WTC11 (cell line): ENCODE measurements at regions of chr2 and their contacts with region 1.

Region 1: DNA sequence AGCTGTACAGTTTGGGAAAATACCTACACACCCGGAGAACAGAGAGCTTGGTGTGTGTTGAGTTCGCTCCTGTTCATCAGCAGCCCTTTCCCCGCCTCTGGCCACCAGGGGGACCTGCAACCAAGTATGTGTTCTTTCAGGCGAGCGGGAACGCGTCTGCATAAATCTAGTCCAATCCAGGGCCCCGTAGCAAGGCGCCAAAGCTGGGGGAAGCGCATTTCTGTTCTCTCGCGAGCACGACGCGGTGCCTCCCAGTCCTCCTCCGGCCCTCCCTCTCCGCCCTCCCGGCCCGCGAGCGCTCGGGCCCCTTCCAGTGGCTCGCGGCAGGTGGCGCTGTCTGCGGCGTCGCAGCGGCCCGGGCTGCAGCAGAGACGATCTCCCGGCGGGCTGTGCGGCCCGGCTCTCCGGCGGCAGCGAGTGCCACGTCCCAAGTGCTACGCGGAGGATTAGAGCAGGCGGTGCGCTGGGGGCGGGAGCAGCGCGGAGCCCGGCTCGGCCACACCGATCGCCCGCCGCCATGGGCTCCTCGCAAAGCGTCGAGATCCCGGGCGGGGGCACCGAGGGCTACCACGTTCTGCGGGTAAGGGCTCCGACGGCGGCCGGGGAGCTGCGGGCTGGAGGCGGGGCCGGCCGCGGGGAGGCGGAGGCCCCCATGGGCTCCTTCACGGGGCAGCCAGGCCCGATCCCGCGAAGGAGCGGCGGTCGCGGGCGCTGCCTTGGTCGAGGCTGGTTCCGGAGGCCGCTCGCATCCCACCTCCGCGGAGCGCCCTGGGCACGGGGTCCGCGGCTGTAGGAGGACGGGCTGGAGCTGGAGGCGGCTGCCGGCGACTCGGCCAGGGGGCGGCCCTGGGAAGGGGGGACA is at the start of gene GORASP2:
- DNase-seq: peak; percentile 99
- ATAC-seq: peak; percentile 97
- H3K4me3 Mint-ChIP-seq: peak within 1 kb of the TSS; percentile 91
- H3K27ac Mint-ChIP-seq: peak within 1 kb of the TSS; percentile 97
- H3K4me1 Mint-ChIP-seq: peaks cover 46% of the 10 kb centered on the region
- H3K27me3 Mint-ChIP-seq: no peaks in the 10 kb centered on the region
- CTCF ChIP-seq: peak; percentile 91
- total RNA-seq, gene GORASP2: 77.8 to 102 TPM (median 79.2 TPM) in 3 replicates

Region 2: GRCh38 chr2:170917219-170917913 is 11.7 kb before region 1 on chr2:
- CTCF ChIA-PET with region 1: interaction called, 18 read pairs
- POLR2A ChIA-PET with region 1: interaction called, 5 read pairs
- DNase-seq: peak; percentile 49
- ATAC-seq: peak; percentile 82
- H3K4me3 Mint-ChIP-seq: no peak overlapping the region; the same call in 1 of the 2 replicates
- H3K27ac Mint-ChIP-seq: peak overlapping the region; percentile 77
- H3K4me1 Mint-ChIP-seq: peaks cover 4% of the 10 kb centered on the region
- H3K27me3 Mint-ChIP-seq: peaks cover 4% of the 10 kb centered on the region; the same call in 1 of the 2 replicates
- CTCF ChIP-seq: no peak